ENCODE measurements at regions of chr1 and their contacts with region 1.

Region 1: GRCh38 chr1:58783993-58784757 is at the start of gene JUN:
- DNase-seq: peak; percentile 99
- H3K4me3 Mint-ChIP-seq: peak within 1 kb of the TSS; percentile 87
- H3K27ac Mint-ChIP-seq: peak within 1 kb of the TSS; percentile 94
- H3K4me1 Mint-ChIP-seq: peaks cover 18% of the 10 kb centered on the region
- H3K27me3 Mint-ChIP-seq: peaks cover 3% of the 10 kb centered on the region
- total RNA-seq, gene JUN: 12.5 to 13.2 TPM

Region 2: GRCh38 chr1:58546520-58547308 is 237.5 kb before region 1 on chr1 and contains the start of gene OMA1:
- CTCF ChIA-PET with region 1: no interaction called
- POLR2A ChIA-PET with region 1: interaction called, 3 read pairs
- intact Hi-C with region 1: loop called (anchors 10 kb)
- DNase-seq: peak; percentile 98
- H3K4me3 Mint-ChIP-seq: peak within 1 kb of the TSS; percentile 90
- H3K27ac Mint-ChIP-seq: peak within 1 kb of the TSS; percentile 95
- H3K4me1 Mint-ChIP-seq: peaks cover 18% of the 10 kb centered on the region
- H3K27me3 Mint-ChIP-seq: no peaks in the 10 kb centered on the region
- total RNA-seq, gene OMA1: 12.0 to 13.0 TPM

Region 3: GRCh38 chr1:58816072-58816746 is 32.0 kb after region 1 on chr1:
- CTCF ChIA-PET with region 1: interaction called, 3 read pairs
- POLR2A ChIA-PET with region 1: interaction called, 21 read pairs
- intact Hi-C with region 1: loop called (anchors 1 kb)
- DNase-seq: peak; percentile 92
- H3K4me3 Mint-ChIP-seq: peak overlapping the region; percentile 81
- H3K27ac Mint-ChIP-seq: peak overlapping the region; percentile 85
- H3K4me1 Mint-ChIP-seq: peaks cover 41% of the 10 kb centered on the region
- H3K27me3 Mint-ChIP-seq: no peaks in the 10 kb centered on the region

Region 4: DNA sequence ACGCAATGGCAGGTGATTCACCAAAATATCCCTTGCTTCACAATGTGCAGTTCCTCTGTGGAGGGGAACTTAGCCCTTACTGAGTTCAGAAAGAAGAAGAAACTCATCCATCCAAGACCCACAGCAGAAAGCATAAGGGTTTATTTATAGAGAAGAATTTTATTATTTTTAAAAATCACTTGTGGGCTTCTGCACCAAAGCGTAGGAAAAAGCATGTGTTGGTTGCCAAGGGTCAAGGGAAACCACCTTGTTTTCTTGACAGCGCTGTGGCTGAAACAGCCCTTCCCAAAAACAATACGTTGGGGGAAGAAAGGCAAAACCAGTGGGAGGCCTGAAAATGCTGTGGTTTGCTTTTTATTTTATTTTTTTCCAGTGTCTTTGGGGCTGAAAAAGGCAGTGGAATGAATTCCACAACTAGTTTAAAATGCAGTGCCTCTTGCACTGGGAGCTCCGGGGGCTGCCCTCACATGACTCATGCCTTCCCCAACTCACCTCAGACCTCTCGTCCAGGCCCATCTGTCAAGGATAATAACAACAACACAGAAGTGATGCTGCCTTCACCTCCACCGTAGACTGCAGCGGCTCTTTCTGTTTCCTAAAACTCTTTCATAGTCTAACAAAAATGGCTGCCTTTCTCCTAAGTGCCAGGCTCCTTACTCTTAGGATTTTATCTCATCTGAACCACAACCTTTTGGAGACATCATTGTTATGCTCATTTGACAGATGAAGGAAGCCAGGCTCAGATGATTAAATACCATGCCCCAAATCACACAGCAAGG is 223.8 kb after region 1 on chr1:
- CTCF ChIA-PET with region 1: no interaction called
- POLR2A ChIA-PET with region 1: no interaction called
- intact Hi-C with region 1: loop called (anchors 5 kb)
- DNase-seq: peak; percentile 64
- H3K4me3 Mint-ChIP-seq: no peak overlapping the region
- H3K27ac Mint-ChIP-seq: peak overlapping the region; percentile 59
- H3K4me1 Mint-ChIP-seq: peaks cover 43% of the 10 kb centered on the region
- H3K27me3 Mint-ChIP-seq: peaks cover 4% of the 10 kb centered on the region

Region 5: GRCh38 chr1:59150577-59151391 is 366.6 kb after region 1 on chr1:
- CTCF ChIA-PET with region 1: no interaction called
- POLR2A ChIA-PET with region 1: no interaction called
- intact Hi-C with region 1: loop called (anchors 5 kb)
- DNase-seq: peak; percentile 37
- H3K4me3 Mint-ChIP-seq: no peak overlapping the region
- H3K27ac Mint-ChIP-seq: no peak overlapping the region
- H3K4me1 Mint-ChIP-seq: peaks cover 16% of the 10 kb centered on the region
- H3K27me3 Mint-ChIP-seq: no peaks in the 10 kb centered on the region

Region 6: DNA sequence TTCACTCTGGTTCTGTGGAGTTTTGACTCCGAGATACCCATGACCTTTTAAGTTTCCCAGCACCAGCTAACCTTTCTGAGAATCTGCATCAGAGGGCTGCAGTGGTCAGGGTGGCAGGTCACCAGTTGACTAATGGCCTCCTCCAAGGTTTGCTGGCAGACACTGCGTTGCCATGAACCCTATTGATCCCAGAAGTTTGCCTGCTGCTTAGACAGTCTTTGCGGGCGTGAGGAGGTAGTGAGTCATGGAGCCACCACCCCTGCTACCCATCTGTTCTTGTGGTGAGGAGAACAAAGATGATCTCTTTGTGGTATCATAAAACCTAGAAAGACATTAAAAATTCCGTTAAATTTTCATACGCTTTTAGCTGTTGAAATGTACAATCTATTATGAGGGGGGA is 693.1 kb after region 1 on chr1:
- CTCF ChIA-PET with region 1: no interaction called
- POLR2A ChIA-PET with region 1: no interaction called
- intact Hi-C with region 1: loop called (anchors 5 kb)
- DNase-seq: peak; percentile 80
- H3K4me3 Mint-ChIP-seq: no peak overlapping the region
- H3K27ac Mint-ChIP-seq: peak overlapping the region; percentile 43
- H3K4me1 Mint-ChIP-seq: peaks cover 15% of the 10 kb centered on the region
- H3K27me3 Mint-ChIP-seq: no peaks in the 10 kb centered on the region

Measured in activated CD4-positive, alpha-beta memory T cell treated with anti-CD3 and anti-CD28 coated beads for 36 hours (primary cell).